ENCODE measurements at regions of chr18 and their contacts with region 1.

Region 1: DNA sequence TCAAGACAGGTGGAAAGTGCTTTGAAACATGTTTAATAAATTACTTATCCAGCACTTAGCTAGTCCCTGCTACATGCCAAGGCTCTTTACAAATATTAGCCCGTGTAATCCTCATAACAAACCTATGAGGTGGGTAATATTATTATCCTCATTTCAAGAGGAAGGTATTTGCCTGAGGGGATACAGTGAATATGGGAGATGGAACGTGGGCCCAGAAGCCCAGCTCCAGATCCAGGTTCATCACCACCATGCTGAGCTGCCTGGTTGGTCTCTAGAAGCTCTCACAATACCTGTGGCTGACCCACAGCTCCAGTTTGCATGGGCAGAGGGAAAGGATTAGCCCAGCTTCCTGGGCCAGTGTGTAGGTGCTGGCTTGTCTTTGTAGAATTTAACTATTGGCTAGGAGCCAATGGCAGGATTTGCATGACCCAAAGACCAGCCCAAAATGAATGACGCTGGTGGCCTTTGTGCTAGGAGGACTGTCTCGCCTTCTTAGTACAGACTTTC is 61.6 kb upstream of the ATP8B1 start:
- DNase-seq: no peak
- ATAC-seq: no peak
- H3K4me3 ChIP-seq: no peak overlapping the region
- H3K4me3 Mint-ChIP-seq: no peak overlapping the region
- H3K27ac ChIP-seq: no peak overlapping the region
- H3K27ac Mint-ChIP-seq: no peak overlapping the region
- H3K4me1 ChIP-seq: no peaks in the 10 kb centered on the region
- H3K4me1 Mint-ChIP-seq: no peaks in the 10 kb centered on the region
- H3K27me3 ChIP-seq: no peaks in the 10 kb centered on the region
- H3K27me3 Mint-ChIP-seq: peaks cover 3% of the 10 kb centered on the region
- CTCF ChIP-seq: no peak

Region 2: GRCh38 chr18:57051657-57052044 is 813.0 kb before region 1 on chr18:
- CTCF ChIA-PET with region 1: no interaction called
- POLR2A ChIA-PET with region 1: no interaction called
- intact Hi-C with region 1: no loop called
- DNase-seq: no peak
- ATAC-seq: peak; percentile 10
- H3K4me3 ChIP-seq: no peak overlapping the region
- H3K4me3 Mint-ChIP-seq: no peak overlapping the region
- H3K27ac ChIP-seq: no peak overlapping the region
- H3K27ac Mint-ChIP-seq: no peak overlapping the region
- H3K4me1 ChIP-seq: no peaks in the 10 kb centered on the region
- H3K4me1 Mint-ChIP-seq: no peaks in the 10 kb centered on the region
- H3K27me3 ChIP-seq: peaks cover 0 to 32% (median 8%) of the 10 kb centered on the region in 4 experiments
- H3K27me3 Mint-ChIP-seq: peaks cover 59% of the 10 kb centered on the region
- CTCF ChIP-seq: no peak

Region 3: GRCh38 chr18:57803103-57803969 is 61.3 kb before region 1 on chr18 and contains the start of gene ATP8B1:
- CTCF ChIA-PET with region 1: no interaction called
- POLR2A ChIA-PET with region 1: no interaction called
- intact Hi-C with region 1: no loop called
- DNase-seq: peak; percentile 40
- ATAC-seq: peak; percentile 62
- H3K4me3 ChIP-seq: peak within 1 kb of the TSS in 4 of 5 experiments; percentile 30 to 69 (median 54)
- H3K4me3 Mint-ChIP-seq: peak within 1 kb of the TSS; percentile 93
- H3K27ac ChIP-seq: no peak within 1 kb of the TSS
- H3K27ac Mint-ChIP-seq: peak within 1 kb of the TSS; percentile 37
- H3K4me1 ChIP-seq: peaks cover 23 to 25% of the 10 kb centered on the region in 2 donors
- H3K4me1 Mint-ChIP-seq: peaks cover 22% of the 10 kb centered on the region
- H3K27me3 ChIP-seq: peaks cover 0 to 38% (median 21%) of the 10 kb centered on the region in 4 experiments
- H3K27me3 Mint-ChIP-seq: peaks cover 40% of the 10 kb centered on the region
- CTCF ChIP-seq: no peak
- total RNA-seq, gene ATP8B1: 0.10 and 0.27 TPM in 2 replicates

Region 4: GRCh38 chr18:57826252-57826651 is 38.4 kb before region 1 on chr18:
- CTCF ChIA-PET with region 1: interaction called, 6 read pairs
- POLR2A ChIA-PET with region 1: interaction called, 14 read pairs
- intact Hi-C with region 1: no loop called
- DNase-seq: no peak
- ATAC-seq: no peak
- H3K4me3 ChIP-seq: no peak overlapping the region
- H3K4me3 Mint-ChIP-seq: no peak overlapping the region
- H3K27ac ChIP-seq: no peak overlapping the region
- H3K27ac Mint-ChIP-seq: no peak overlapping the region
- H3K4me1 ChIP-seq: peaks cover 0 to 2% of the 10 kb centered on the region in 2 donors
- H3K4me1 Mint-ChIP-seq: peaks cover 5% of the 10 kb centered on the region
- H3K27me3 ChIP-seq: no peaks in the 10 kb centered on the region
- H3K27me3 Mint-ChIP-seq: no peaks in the 10 kb centered on the region
- CTCF ChIP-seq: no peak